B cell (primary cell): ENCODE measurements at regions of chr10 and their contacts with region 1.

Region 1: DNA sequence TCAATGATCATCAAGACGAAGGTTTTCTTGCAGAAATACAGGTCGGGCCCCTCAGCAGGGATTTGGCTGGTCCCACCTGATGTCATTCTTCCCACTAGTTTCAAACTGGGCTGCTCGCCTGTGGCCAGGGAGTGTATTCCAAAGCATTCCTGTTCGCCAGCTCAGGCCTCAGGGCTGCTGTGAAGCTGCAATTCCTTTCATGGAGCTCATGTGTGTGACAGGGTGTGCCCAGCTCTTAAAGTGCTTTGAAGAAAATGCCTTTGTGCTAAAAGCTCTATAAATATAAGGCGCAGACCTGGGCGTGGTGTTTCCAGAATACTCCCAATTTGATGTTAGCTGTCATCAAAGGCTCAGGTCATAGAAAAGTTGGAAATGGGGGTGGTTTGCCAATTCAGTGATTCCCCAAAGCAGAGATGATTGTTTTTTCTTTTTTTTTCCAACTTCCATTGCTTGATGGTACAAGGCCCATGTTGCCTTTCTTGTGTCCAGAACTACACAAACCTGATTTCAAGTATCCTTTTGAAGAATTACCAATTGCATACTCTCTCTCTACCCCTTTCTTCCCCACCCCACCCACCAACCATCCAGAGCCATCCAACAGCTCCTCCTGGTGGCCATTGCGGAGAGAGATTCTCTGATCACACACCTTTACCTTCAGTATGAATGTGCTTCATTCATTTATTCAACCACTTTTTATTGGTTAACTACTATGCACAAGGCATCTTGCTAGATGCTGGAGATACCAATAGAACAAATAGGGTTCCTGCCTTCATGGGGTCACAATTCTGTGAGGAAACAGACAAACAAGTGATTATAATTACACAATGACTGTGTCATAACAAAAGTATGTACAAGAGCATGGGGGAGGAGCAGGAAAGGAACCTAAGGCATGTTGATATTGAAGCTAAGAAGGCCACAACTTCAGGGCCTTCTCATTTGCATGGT is 297.3 kb upstream of the LYZL1 start:
- DNase-seq: peak; percentile 33
- ATAC-seq: no peak
- H3K4me3 ChIP-seq: no peak overlapping the region
- H3K4me3 Mint-ChIP-seq: no peak overlapping the region
- H3K27ac ChIP-seq: no peak overlapping the region
- H3K27ac Mint-ChIP-seq: no peak overlapping the region
- H3K4me1 ChIP-seq: no peaks in the 10 kb centered on the region
- H3K4me1 Mint-ChIP-seq: no peaks in the 10 kb centered on the region
- H3K27me3 ChIP-seq: no peaks in the 10 kb centered on the region
- H3K27me3 Mint-ChIP-seq: no peaks in the 10 kb centered on the region
- CTCF ChIP-seq: peak; percentile 46

Region 2: GRCh38 chr10:28676968-28677887 is 314.4 kb before region 1 on chr10 and contains the start of gene BAMBI:
- CTCF ChIA-PET with region 1: no interaction called
- POLR2A ChIA-PET with region 1: no interaction called
- intact Hi-C with region 1: loop called (anchors 5 kb)
- DNase-seq: peak; percentile 92
- ATAC-seq: peak; percentile 96
- H3K4me3 ChIP-seq: peak within 1 kb of the TSS; percentile 38 to 68 (median 58)
- H3K4me3 Mint-ChIP-seq: peak within 1 kb of the TSS; percentile 91
- H3K27ac ChIP-seq: no peak within 1 kb of the TSS
- H3K27ac Mint-ChIP-seq: peak within 1 kb of the TSS; percentile 68
- H3K4me1 ChIP-seq: peaks cover 37 to 39% of the 10 kb centered on the region in 2 donors
- H3K4me1 Mint-ChIP-seq: peaks cover 35% of the 10 kb centered on the region
- H3K27me3 ChIP-seq: peaks cover 3 to 74% (median 49%) of the 10 kb centered on the region in 4 experiments
- H3K27me3 Mint-ChIP-seq: peaks cover 75% of the 10 kb centered on the region
- CTCF ChIP-seq: peak; percentile 71
- total RNA-seq, gene BAMBI: 0.22 and 0.84 TPM in 2 replicates